ENCODE measurements at regions of chr7 and their contacts with region 1.

Region 1: GRCh38 chr7:100015232-100016209 is at the start of gene ZKSCAN1:
- DNase-seq: peak; percentile 85 to 91
- H3K4me3 ChIP-seq: peak within 1 kb of the TSS; percentile 86 to 94
- H3K27ac ChIP-seq: peak within 1 kb of the TSS; percentile 92 to 97
- H3K4me1 ChIP-seq: peaks cover 0 to 25% (median 22%) of the 10 kb centered on the region in 4 donors
- H3K27me3 ChIP-seq: no peaks in the 10 kb centered on the region
- CTCF ChIP-seq: no peak

Region 2: DNA sequence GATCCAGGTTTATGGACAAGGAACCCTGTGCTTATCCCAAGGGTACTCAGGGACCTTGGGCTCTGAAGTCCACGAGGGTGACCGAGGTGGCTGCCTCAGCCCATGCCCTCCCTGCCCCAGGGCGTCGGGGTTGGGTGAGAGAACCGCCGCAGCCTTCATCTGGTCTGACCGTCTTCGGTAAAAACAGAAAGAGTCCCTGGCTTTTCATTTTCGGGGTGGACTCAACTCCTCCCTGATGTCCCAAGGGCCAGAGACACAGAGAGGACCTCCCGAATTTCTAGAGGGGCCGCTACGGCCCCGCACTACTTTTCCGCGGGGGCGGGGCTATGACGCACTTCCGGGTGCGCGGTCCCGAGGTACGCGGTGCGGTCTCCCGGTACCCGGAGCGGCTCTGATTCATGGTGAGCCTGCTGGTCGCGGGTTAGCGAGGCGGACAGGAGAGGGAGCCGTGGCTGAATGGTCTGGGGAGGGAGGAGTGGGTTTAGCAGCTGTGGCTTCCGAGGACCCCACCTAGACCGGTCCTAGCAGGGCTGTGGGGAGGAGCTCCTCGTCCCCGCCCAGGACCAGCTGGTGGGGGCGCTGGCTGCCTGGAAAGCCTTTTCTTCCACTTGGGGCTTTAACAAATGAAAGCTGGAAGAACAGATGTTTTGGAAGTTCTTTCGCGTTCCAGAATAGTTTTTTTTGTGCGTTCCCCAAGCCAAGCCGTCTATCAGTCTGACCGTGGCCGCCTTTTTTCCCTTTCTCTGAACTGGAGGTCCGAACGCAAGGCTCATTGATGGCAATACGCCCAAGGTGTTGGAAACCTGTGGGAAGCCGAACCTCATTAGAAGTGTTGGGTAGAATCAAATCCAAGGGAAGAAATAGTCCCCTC is 34.2 kb after region 1 on chr7 and contains the start of gene ZSCAN21:
- intact Hi-C with region 1: loop called (anchors 5 kb)
- DNase-seq: peak; percentile 86 to 90
- H3K4me3 ChIP-seq: peak within 1 kb of the TSS; percentile 69 to 97
- H3K27ac ChIP-seq: peak within 1 kb of the TSS; percentile 92 to 98
- H3K4me1 ChIP-seq: peaks cover 0 to 15% (median 10%) of the 10 kb centered on the region in 4 donors
- H3K27me3 ChIP-seq: no peaks in the 10 kb centered on the region
- CTCF ChIP-seq: peak in 1 of 2 experiments; percentile 12

Region 3: GRCh38 chr7:100081535-100082102 is 66.1 kb after region 1 on chr7 and contains the start of gene ZNF3:
- intact Hi-C with region 1: loop called (anchors 10 kb)
- DNase-seq: peak; percentile 98 to 99
- H3K4me3 ChIP-seq: peak within 1 kb of the TSS; percentile 95 to 98
- H3K27ac ChIP-seq: peak within 1 kb of the TSS; percentile 82 to 88
- H3K4me1 ChIP-seq: peaks cover 5 to 40% (median 25%) of the 10 kb centered on the region in 4 donors
- H3K27me3 ChIP-seq: no peaks in the 10 kb centered on the region
- CTCF ChIP-seq: peak; percentile 91 to 93

Region 4: GRCh38 chr7:100428199-100428966 is 412.9 kb after region 1 on chr7 and contains the start of gene ZCWPW1:
- intact Hi-C with region 1: loop called (anchors 10 kb)
- DNase-seq: peak; percentile 96 to 98
- H3K4me3 ChIP-seq: peak within 1 kb of the TSS; percentile 83 to 94
- H3K27ac ChIP-seq: peak within 1 kb of the TSS; percentile 99 to 100
- H3K4me1 ChIP-seq: peaks cover 0 to 36% (median 26%) of the 10 kb centered on the region in 4 donors
- H3K27me3 ChIP-seq: no peaks in the 10 kb centered on the region
- CTCF ChIP-seq: no peak

Measured in tibial artery (tissue), 4 donors.